ENCODE measurements at regions of chr11 and their contacts with region 1.

Region 1: DNA sequence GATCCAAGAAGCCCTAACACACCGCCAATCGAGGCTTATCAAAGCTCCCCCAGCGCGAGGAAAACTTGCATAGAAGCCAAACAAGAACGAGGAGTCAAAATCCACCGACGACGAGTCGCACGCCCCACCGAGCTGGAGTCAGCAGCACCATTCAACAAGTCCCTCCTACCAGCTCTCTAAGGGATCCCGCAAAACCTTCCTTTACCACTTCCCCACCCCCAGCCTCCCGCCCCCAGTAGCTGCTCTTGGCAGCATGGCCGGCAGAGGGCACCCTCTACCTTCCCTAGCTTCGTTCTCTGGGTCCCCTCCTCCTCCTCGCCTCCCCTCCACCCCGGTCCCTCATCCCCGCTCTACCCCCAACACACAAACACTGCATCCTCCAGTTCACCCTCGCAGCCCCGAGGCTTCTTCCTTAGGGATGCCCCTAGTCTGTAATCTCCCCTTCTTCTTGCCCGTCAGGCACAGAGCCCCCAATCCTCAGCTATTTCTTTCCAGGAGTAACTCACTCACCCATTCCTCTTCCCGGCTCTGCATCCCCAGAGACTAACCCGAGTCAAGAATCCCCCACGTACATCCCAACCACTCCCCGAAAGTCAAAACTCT is 1.3 kb downstream of the BDNF start:
- DNase-seq: peak; percentile 49 to 86
- H3K4me3 ChIP-seq: peak overlapping the region; percentile 64; the same call in 1 of the 2 replicates
- H3K27ac ChIP-seq: no peak overlapping the region
- H3K4me1 ChIP-seq: peaks cover 23% of the 10 kb centered on the region
- H3K27me3 ChIP-seq: peaks cover 33% of the 10 kb centered on the region
- CTCF ChIP-seq: peak; percentile 88

Region 2: GRCh38 chr11:27718346-27718852 is 19.4 kb after region 1 on chr11:
- CTCF ChIA-PET with region 1: interaction called, 3 read pairs
- POLR2A ChIA-PET with region 1: interaction called, 10 read pairs
- intact Hi-C with region 1: no loop called
- DNase-seq: peak in 1 of 2 experiments; percentile 55
- H3K4me3 ChIP-seq: peak overlapping the region; percentile 58
- H3K27ac ChIP-seq: peak overlapping the region; percentile 68
- H3K4me1 ChIP-seq: 0 out of 2 replicates have a peak, but pooled peaks cover 7% of the 10 kb centered on the region
- H3K27me3 ChIP-seq: no peaks in the 10 kb centered on the region
- CTCF ChIP-seq: no peak

Region 3: GRCh38 chr11:28107748-28108618 is 409.0 kb after region 1 on chr11 and contains the starts of genes KIF18A and METTL15:
- CTCF ChIA-PET with region 1: interaction called, 15 read pairs
- POLR2A ChIA-PET with region 1: interaction called, 4 read pairs
- intact Hi-C with region 1: loop called (anchors 2 kb)
- DNase-seq: peak; percentile 97 to 99
- H3K4me3 ChIP-seq: peak within 1 kb of the TSS; percentile 93
- H3K27ac ChIP-seq: peak within 1 kb of the TSS; percentile 61
- H3K4me1 ChIP-seq: peaks cover 48% of the 10 kb centered on the region
- H3K27me3 ChIP-seq: no peaks in the 10 kb centered on the region
- CTCF ChIP-seq: no peak
- total RNA-seq, gene KIF18A: 22.9 and 31.1 TPM in 2 replicates
- total RNA-seq, gene METTL15: 17.9 and 19.9 TPM in 2 replicates

Region 4: DNA sequence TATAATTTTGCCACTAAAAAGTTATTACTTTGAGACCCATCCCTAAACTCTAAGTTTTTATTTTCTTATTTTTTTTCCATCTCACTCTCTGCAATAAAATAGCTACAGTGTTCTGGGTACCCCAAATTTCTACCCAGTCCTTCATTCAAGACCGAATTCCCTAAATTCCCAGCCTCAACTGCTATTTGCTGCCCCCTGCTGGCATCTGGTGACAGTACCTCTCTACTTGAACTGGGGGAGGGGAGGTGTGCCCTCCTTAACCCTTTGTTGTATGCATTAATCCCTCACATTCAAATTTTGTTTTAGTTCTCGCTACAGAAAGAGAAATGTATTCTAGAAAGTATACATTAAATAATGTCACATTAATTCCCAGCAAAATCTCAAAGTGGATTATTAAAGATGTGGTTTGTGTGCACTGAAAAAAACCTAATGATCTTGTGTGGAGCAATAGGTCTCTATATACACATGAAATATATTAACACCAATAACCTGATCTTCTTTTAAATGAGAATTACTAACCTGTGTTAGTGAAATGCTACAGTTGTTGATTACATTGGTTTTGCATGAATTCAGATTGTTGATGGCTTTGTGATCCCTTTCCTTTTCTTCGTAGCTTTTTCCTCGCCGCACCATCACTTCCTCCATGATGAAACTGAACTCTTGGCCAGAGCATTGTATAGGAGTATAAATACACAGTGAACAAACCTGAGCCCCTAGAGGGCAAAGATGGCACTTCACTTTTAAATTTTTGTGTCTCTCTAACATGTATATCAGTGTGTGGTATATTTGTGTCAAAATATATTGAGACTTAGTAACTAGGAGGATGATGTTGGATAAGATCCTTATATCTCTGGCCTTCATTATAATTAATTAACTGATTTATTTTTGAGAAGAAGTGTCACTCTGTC is 999.2 kb after region 1 on chr11:
- CTCF ChIA-PET with region 1: no interaction called
- POLR2A ChIA-PET with region 1: no interaction called
- intact Hi-C with region 1: loop called (anchors 1 kb)
- DNase-seq: peak in 1 of 2 experiments; percentile 37
- H3K4me3 ChIP-seq: no peak overlapping the region
- H3K27ac ChIP-seq: no peak overlapping the region
- H3K4me1 ChIP-seq: peaks cover 24% of the 10 kb centered on the region
- H3K27me3 ChIP-seq: no peaks in the 10 kb centered on the region
- CTCF ChIP-seq: peak; percentile 81

Region 5: GRCh38 chr11:29019960-29020683 is 1321.1 kb after region 1 on chr11:
- CTCF ChIA-PET with region 1: no interaction called
- POLR2A ChIA-PET with region 1: no interaction called
- intact Hi-C with region 1: loop called (anchors 2 kb)
- DNase-seq: peak in 1 of 2 experiments; percentile 26
- H3K4me3 ChIP-seq: no peak overlapping the region
- H3K27ac ChIP-seq: no peak overlapping the region
- H3K4me1 ChIP-seq: peaks cover 6% of the 10 kb centered on the region; the same call in 1 of the 2 replicates
- H3K27me3 ChIP-seq: no peaks in the 10 kb centered on the region
- CTCF ChIP-seq: peak; percentile 31; the same call in 1 of the 2 replicates

Region 6: DNA sequence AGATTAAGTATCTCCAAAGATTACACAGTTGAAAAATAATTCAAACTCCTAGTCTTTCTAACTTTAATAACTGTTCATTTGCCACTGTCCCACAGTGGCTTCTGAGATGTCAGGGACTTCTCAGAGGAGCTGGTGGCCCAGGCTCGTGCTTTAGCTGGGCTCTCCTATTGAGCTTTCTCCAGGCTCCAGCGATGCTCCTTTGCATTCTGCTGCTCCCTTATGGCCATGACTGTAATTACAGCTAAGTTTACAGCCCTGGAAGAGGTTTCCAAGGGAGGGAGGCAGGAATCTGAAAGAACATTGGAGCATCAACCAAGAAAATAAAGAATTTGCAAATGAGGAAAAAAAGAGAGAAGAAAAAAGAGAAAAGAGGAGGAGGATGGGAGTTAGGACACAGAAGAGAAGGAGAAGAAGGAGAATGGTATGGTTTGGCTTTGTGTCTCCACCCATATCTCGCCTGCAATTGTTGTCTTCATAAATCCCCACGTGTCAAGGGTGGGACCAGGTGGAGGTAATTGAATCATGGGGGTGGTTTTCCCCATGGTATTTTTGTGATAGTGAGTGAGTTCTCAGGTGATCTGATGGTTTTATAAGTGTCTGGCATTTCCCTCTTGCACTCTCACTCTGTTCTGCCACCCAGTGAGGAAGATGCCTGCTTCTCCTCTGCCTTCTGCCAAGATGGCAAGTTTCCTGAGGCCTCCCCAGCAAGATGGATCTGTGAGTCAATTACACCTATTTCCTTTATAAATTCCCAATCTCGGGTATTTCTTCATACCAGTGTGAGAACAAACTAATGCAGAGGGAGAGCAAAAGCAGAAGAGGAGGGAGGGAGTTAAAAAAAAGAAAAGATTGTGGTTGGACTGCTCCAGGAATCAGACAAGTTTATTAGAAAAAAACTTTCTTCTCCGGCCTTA is 1460.8 kb after region 1 on chr11:
- CTCF ChIA-PET with region 1: interaction called, 6 read pairs
- POLR2A ChIA-PET with region 1: no interaction called
- intact Hi-C with region 1: loop called (anchors 5 kb)
- DNase-seq: peak in 1 of 2 experiments; percentile 48
- H3K4me3 ChIP-seq: no peak overlapping the region
- H3K27ac ChIP-seq: no peak overlapping the region
- H3K4me1 ChIP-seq: no peaks in the 10 kb centered on the region
- H3K27me3 ChIP-seq: no peaks in the 10 kb centered on the region
- CTCF ChIP-seq: peak; percentile 79

Region 7: GRCh38 chr11:29333993-29334775 is 1635.2 kb after region 1 on chr11:
- CTCF ChIA-PET with region 1: interaction called, 11 read pairs
- POLR2A ChIA-PET with region 1: interaction called, 9 read pairs
- intact Hi-C with region 1: loop called (anchors 1 kb)
- DNase-seq: no peak
- H3K4me3 ChIP-seq: no peak overlapping the region
- H3K27ac ChIP-seq: no peak overlapping the region
- H3K4me1 ChIP-seq: no peaks in the 10 kb centered on the region
- H3K27me3 ChIP-seq: peaks cover 4% of the 10 kb centered on the region
- CTCF ChIP-seq: peak; percentile 74

Measured in PC-9 (cell line).